ENCODE measurements at regions of chr19 and their contacts with region 1.

Region 1: GRCh38 chr19:48255376-48256303 is at the start of gene CARD8:
- DNase-seq: peak; percentile 88
- H3K4me3 Mint-ChIP-seq: peak within 1 kb of the TSS; percentile 92
- H3K27ac Mint-ChIP-seq: peak within 1 kb of the TSS; percentile 97
- H3K4me1 Mint-ChIP-seq: peaks cover 65% of the 10 kb centered on the region
- H3K27me3 Mint-ChIP-seq: no peaks in the 10 kb centered on the region
- total RNA-seq, gene CARD8: 99.8 to 104 TPM

Region 2: GRCh38 chr19:48110350-48110966 is 145.2 kb before region 1 on chr19 and contains the start of gene PLA2G4C:
- CTCF ChIA-PET with region 1: interaction called, 4 read pairs
- intact Hi-C with region 1: loop called (anchors 1 kb)
- DNase-seq: peak; percentile 89
- H3K4me3 Mint-ChIP-seq: peak within 1 kb of the TSS; percentile 85
- H3K27ac Mint-ChIP-seq: peak within 1 kb of the TSS; percentile 93
- H3K4me1 Mint-ChIP-seq: peaks cover 11% of the 10 kb centered on the region
- H3K27me3 Mint-ChIP-seq: no peaks in the 10 kb centered on the region
- total RNA-seq, gene PLA2G4C: 8.8 to 9.6 TPM

Region 3: GRCh38 chr19:48170038-48170812 is 85.4 kb before region 1 on chr19 and contains the starts of genes LIG1 and ZSWIM9:
- CTCF ChIA-PET with region 1: interaction called, 5 read pairs
- intact Hi-C with region 1: loop called (anchors 1 kb)
- DNase-seq: peak; percentile 93
- H3K4me3 Mint-ChIP-seq: peak within 1 kb of the TSS; percentile 90
- H3K27ac Mint-ChIP-seq: peak within 1 kb of the TSS; percentile 97
- H3K4me1 Mint-ChIP-seq: peaks cover 30% of the 10 kb centered on the region
- H3K27me3 Mint-ChIP-seq: no peaks in the 10 kb centered on the region
- total RNA-seq, gene LIG1: 187 to 195 TPM
- total RNA-seq, gene ZSWIM9: 6.1 to 6.7 TPM

Region 4: DNA sequence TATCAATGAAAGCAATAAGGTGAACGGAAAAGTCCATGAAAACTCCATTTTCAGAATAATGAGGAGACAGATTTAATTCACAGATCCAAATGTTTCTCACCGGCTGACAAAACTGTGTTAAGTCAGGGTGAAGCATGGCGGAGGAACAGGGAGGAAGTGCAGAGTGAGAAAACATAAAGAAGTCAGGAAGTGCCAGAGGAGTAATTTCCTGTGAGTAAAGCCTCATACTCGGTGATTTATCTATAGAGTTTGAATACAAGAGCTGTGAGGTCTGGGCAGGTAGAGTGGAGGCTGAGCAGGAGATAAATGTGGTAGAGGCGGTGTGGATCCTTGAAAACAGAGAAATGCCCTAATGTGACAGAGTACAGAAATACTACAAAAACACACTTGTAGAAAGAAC is 11.4 kb before region 1 on chr19:
- CTCF ChIA-PET with region 1: interaction called, 6 read pairs
- intact Hi-C with region 1: loop called (anchors 1 kb)
- DNase-seq: peak; percentile 67
- H3K4me3 Mint-ChIP-seq: peak overlapping the region; percentile 70
- H3K27ac Mint-ChIP-seq: peak overlapping the region; percentile 92
- H3K4me1 Mint-ChIP-seq: peaks cover 52% of the 10 kb centered on the region
- H3K27me3 Mint-ChIP-seq: no peaks in the 10 kb centered on the region

Measured in activated naive CD4-positive, alpha-beta T cell treated with anti-CD3 and anti-CD28 coated beads for 36 hours (primary cell).